Cardiac septum (tissue), 1 donor: ENCODE measurements at regions of chr1 and their contacts with region 1.

Region 1: GRCh38 chr1:36653850-36654249 is 171.1 kb upstream of the CSF3R start:
- DNase-seq: peak; percentile 75

Region 2: GRCh38 chr1:36542962-36543515 is 110.8 kb before region 1 on chr1:
- intact Hi-C with region 1: no loop called
- DNase-seq: peak; percentile 44

Region 3: DNA sequence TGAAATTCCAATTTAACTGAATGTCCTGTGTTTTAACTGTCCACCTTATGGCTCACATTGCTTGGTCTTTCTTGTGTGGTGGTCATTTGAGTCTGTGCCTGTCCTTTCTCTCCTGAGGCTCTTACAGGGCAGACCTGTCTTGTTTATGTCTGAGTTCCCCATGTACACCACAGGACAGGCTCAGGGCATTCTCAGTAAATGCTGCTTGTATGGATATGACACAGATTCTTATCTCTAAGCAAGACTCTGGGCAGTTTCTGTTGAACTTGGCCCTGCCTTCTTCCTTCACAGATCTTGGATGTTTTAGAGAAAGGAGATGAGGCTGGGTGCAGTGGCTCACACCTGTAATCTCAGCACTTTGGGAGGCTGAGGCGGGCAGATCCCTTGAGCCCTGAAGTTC is 12.1 kb before region 1 on chr1:
- intact Hi-C with region 1: loop called (anchors 1 kb)
- DNase-seq: no peak